IMR-90 (cell line): ENCODE measurements at regions of chr2 and their contacts with region 1.

Region 1: GRCh38 chr2:64988420-64989125 is 626 bp upstream of the SLC1A4 start:
- DNase-seq: peak; percentile 89
- ATAC-seq: peak; percentile 80
- H3K4me3 ChIP-seq: peak overlapping the region; percentile 64
- H3K27ac ChIP-seq: peak overlapping the region; percentile 84
- H3K4me1 ChIP-seq: peaks cover 10% of the 10 kb centered on the region
- H3K27me3 ChIP-seq: no peaks in the 10 kb centered on the region
- CTCF ChIP-seq: peak; percentile 42
- POLR2A ChIP-seq: peak; percentile 93
- RAD21 ChIP-seq: peak; percentile 12; the same call in 1 of the 2 replicates

Region 2: DNA sequence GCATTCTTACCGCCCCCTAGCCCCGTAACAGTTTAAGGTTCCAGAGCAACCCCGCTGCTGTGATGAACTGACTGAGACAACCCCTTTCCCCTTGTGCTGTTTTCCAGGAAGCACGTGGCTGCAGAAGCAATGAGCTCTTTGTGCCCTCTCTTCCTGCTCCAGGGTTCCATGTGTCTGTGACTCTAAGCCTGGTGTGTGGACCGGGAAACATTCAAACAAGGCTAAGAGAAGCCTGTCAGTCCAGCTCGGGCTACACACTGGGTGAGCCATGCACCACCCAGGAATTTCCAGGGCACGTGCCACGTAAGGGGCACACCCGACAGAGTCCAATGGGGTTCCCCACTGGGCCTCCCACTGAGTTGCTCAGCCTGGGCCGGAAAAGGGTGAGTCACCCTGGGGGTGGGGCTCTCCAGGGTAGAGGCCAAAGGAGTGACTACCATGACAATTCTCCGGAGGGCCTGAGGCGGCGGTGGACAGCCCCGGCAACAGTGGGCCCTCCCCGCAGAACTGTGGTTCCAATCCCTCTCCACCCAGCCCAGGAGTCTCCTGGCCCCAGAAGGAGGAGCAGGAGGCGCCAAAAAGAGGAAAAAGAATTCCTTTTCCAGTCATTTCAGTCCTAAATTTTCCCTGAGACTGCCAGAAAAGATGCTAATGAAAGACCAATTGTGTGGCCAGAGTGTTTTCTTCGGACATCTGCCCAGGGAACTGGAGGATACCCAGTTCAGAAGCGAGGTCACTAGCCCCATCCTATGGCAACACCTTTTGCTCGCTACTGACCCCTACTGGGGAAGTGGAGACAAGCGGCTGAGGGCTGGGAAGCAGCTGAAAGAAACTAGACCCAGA is 157.2 kb before region 1 on chr2:
- CTCF ChIA-PET with region 1: no interaction called
- POLR2A ChIA-PET with region 1: interaction called, 19 read pairs
- dilution Hi-C with region 1: no loop called
- in situ Hi-C with region 1: no loop called
- intact Hi-C with region 1: no loop called
- DNase-seq: peak; percentile 89
- ATAC-seq: peak; percentile 93
- H3K4me3 ChIP-seq: no peak overlapping the region
- H3K27ac ChIP-seq: peak overlapping the region; percentile 18; the same call in 1 of the 2 replicates
- H3K4me1 ChIP-seq: peaks cover 5% of the 10 kb centered on the region
- H3K27me3 ChIP-seq: no peaks in the 10 kb centered on the region
- CTCF ChIP-seq: peak; percentile 62
- POLR2A ChIP-seq: no peak
- RAD21 ChIP-seq: peak; percentile 41

Region 3: DNA sequence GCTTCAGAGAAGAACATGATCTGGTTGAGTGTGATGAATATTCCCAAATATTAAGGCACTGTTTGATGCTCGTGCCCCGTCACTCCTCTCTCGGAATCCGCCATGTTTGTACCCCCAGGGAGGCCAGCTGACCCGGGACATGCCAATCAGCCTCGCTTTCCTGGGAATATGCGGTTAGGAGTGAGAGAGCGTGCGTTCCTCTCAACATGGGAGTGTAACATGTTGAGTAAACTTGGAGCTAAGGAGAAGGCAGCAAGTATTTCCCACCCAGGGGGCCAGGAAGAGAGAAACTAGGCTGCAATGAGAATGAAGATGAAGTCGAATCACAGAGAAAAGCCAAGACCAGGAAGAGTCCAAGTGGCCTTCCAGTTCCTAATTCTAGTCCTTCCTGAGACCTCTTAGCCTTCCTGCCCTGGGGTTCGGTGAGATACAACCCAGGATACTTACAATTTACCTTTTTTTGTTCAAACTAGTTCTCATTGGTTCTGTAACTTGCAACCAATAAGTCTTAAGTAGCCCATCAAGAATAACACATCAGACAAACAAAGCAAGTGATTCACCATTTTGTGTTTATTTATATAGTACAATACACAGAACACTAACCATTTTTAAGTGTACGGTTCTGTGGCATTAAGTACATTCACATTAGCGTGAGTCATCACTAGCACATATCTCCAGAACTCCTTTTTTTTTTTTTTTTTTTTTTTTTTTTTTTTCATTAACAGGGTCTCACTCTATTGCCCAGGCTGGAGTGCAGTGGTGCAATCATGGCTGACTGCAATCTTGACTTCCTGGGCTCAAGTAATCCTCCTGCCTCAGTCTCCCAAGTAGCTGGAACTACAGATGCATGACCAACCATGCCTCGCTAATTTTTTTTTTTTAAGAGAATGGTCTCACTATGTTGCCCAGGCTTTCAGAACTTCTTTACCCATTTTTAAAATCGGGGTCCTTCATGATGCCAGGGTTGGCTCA is 35.8 kb before region 1 on chr2:
- CTCF ChIA-PET with region 1: no interaction called
- POLR2A ChIA-PET with region 1: no interaction called
- dilution Hi-C with region 1: no loop called
- in situ Hi-C with region 1: no loop called
- intact Hi-C with region 1: loop called (anchors 5 kb)
- DNase-seq: peak; percentile 96
- ATAC-seq: peak; percentile 92
- H3K4me3 ChIP-seq: no peak overlapping the region
- H3K27ac ChIP-seq: peak overlapping the region; percentile 56; the same call in 1 of the 2 replicates
- H3K4me1 ChIP-seq: peaks cover 18% of the 10 kb centered on the region
- H3K27me3 ChIP-seq: peaks cover 8% of the 10 kb centered on the region
- CTCF ChIP-seq: no peak
- POLR2A ChIP-seq: no peak
- RAD21 ChIP-seq: no peak